Left ventricle myocardium superior (tissue), 1 donor: ENCODE measurements at regions of chr3 and their contacts with region 1.

Region 1: GRCh38 chr3:127831723-127832172 is 9.4 kb upstream of the MGLL start:
- DNase-seq: peak; percentile 73
- ATAC-seq: peak; percentile 59

Region 2: GRCh38 chr3:127473244-127474024 is 358.3 kb before region 1 on chr3:
- intact Hi-C with region 1: no loop called
- DNase-seq: no peak
- ATAC-seq: no peak

Region 3: DNA sequence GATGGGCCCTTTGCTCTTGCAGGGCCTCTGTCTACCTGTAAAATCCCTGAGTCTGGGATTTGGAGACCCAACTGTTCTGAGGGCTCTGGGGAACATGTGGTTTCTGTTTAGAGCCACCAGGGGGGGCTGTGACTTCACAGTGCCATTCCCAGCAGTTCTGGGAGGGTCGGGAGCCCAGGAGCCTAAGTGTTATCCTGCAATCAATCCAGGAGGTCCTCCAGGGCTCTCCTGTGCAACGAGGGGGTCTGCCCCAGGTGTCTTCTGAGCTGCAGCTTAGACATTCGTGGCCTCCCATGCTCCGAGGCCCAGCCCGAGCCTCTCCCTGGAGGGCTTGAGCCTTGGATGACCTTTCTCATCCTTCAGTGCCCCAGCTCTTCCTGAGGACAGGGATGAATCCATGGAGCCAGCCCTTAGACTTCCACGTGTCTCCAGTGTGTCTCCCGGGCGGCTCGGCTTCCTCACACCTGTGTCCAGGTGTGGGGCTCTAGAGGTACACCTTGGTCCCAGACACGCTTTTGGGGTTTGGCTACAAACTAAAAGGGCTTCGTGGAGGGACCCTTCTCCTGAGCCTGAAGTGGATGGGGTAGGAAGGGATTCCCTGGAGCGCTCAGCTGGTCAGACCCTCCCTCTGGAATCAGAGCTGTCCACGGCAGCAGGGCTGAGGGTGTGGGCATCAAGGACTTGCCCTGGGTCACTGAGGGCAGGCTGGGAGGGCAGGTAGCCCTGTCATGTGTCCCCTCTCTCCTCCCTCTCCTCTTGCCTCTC is 179.3 kb before region 1 on chr3:
- intact Hi-C with region 1: loop called (anchors 10 kb)
- DNase-seq: peak; percentile 68
- ATAC-seq: peak; percentile 91

Region 4: DNA sequence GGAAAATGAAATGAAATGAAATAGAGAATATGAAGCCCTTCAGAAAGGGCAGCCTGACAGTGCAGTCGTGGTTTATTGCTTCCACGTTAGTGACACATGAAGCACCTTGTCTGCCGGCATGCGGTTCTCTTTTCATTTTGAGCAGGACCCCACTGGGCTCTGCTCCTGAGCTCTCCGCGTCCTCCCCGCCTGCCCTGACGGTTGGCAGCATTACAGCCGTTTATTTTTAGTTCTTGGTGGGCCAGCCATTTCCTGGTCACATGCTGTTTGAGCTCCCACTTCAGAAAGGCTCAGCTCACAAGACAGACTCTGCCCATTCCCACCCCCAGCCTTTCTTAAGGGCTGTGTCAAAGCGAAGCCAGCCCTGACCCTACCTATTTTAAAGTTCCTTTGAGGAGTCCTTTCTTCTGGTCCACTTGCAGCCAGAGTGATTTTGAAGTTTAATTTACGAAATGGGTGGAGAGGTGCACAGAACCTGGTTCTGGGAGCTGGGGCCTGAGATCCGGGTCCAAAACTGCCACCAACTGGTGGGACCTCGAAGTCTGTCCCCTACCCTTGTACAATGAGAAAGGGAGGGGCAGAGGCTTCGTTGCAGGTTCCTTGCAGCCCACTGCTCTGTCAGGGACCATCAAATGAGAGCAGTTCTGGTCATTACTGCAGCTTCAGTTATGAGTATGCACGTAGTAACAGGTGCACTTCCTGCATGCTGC is 69.5 kb before region 1 on chr3:
- intact Hi-C with region 1: no loop called
- DNase-seq: peak; percentile 66
- ATAC-seq: peak; percentile 81

Region 5: GRCh38 chr3:128236657-128237056 is 404.9 kb after region 1 on chr3:
- intact Hi-C with region 1: no loop called
- DNase-seq: no peak
- ATAC-seq: peak; percentile 74